ENCODE measurements at regions of chr9 and their contacts with region 1.

Region 1: DNA sequence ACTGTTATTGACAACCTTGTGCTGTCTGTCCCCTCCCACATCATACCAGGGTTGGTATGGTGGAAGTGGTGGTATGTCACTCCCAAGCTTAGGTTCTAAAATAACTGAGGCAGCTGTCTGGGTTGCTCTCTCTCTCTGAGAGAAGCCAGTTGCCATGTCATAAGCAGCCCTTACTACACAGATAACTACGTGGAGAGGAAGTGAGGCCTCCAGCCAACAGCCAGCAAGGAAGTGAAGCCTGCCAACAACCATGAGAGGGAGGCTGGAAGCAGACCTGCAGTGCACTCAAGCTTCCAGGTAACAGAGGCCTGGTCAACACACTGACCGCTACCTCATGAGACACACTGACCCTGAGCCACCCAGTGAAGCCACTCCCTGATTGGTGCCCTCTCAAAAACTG is 18.6 kb downstream of the CTNNAL1 start:
- DNase-seq: peak; percentile 20
- CTCF ChIP-seq: no peak

Region 2: DNA sequence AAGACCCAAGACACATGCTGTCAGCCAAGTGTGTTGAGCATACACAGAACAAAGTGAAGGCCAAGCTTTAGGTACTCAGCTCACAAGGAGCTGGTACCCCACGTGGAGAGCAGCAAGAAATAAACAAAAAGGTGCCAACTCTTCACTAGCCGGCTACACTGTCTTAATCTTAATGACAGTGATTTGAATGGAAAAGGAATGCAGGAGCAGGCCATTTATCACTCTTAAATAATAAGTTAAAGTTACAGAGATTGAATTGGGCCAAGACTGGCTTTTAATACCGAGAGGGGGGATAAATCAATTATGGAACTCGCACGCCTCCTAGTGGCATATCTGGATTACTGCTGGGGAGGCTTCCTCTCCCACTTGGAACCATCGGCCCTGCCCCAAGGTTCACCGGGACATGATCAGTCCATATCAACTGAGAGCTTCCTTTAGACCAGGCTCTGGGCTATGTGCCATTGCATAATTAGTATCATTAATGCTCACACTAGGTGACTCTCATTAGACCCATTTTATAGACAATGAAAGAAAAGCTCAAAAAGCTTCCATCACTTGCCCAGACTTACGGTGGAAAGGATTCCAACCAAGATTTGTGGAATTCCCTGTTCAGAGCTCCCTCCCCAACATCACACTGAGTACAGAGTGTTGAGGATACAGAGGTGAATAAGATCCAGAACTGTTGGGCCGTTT is 232.9 kb before region 1 on chr9:
- CTCF ChIA-PET with region 1: no interaction called
- POLR2A ChIA-PET with region 1: no interaction called
- DNase-seq: peak; percentile 66
- CTCF ChIP-seq: peak; percentile 68

Region 3: GRCh38 chr9:108953983-108954574 is 40.6 kb before region 1 on chr9:
- CTCF ChIA-PET with region 1: interaction called, 10 read pairs
- POLR2A ChIA-PET with region 1: no interaction called
- DNase-seq: peak; percentile 43
- CTCF ChIP-seq: peak; percentile 54

Measured in GM10248 (cell line).